CD4-positive, alpha-beta memory T cell (primary cell): ENCODE measurements at regions of chr20 and their contacts with region 1.

Region 1: DNA sequence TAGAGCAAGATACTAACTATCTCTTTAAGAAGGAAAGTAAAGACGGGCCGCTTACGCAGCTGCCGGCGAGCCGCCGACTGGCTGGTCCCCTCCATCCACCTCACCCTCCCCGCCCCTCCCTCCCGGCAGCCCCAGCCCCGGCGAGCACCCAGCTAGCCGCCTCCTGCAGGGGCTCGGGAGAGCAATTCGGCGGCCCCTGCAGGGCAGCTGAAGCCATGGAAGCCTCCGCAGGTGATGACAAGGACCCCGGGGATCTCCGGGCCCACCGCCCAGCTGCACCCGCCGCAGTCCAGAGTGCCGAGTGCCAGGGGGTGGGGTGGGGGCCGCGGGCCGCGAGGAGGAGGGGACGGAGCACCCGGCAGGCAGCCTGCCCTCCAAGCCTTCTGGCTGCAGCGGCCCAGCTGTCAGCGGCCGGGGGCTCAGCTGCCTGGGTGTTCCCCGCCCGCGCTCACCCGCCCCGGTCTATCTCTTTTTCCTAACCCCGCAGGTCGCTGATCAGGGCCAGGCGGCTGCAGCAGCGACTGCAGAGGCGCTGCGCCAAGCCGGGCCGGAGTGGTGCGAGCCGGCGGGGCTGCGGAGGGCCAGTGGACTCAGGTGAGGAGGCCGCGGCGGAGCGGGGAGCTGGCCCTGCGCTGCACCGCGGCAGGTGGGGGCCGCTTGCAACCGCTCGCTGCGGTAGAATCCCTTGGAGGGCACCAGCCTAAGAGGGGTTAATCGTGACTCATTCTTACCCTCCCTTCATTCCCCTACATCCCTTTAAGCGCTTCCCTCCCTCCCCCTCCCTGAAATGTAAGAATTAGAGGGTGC is at the start of gene SNPH:
- DNase-seq: peak; percentile 67 to 84 (median 72)
- H3K4me3 ChIP-seq: peak within 1 kb of the TSS; percentile 43 to 58
- H3K4me3 Mint-ChIP-seq: peak within 1 kb of the TSS; percentile 86 to 96 (median 92)
- H3K27ac ChIP-seq: peak within 1 kb of the TSS; percentile 65
- H3K27ac Mint-ChIP-seq: peak within 1 kb of the TSS; percentile 88 to 99 (median 96)
- H3K4me1 ChIP-seq: peaks cover 36% of the 10 kb centered on the region
- H3K4me1 Mint-ChIP-seq: peaks cover 23 to 53% (median 39%) of the 10 kb centered on the region in 4 donors
- H3K27me3 ChIP-seq: peaks cover 4% of the 10 kb centered on the region
- H3K27me3 Mint-ChIP-seq: no peaks in the 10 kb centered on the region
- total RNA-seq, gene SNPH: 14.3 to 15.9 TPM

Region 2: GRCh38 chr20:561437-562231 is 704.7 kb before region 1 on chr20:
- CTCF ChIA-PET with region 1: no interaction called
- POLR2A ChIA-PET with region 1: no interaction called
- intact Hi-C with region 1: no loop called
- DNase-seq: peak in 4 of 5 donors; percentile 8 to 29 (median 20)
- H3K4me3 ChIP-seq: no peak overlapping the region
- H3K4me3 Mint-ChIP-seq: peak overlapping the region in 2 of 8 donors; percentile 19 to 21
- H3K27ac ChIP-seq: no peak overlapping the region
- H3K27ac Mint-ChIP-seq: peak overlapping the region in 1 of 7 donors; percentile 83
- H3K4me1 ChIP-seq: no peaks in the 10 kb centered on the region
- H3K4me1 Mint-ChIP-seq: peaks cover 0 to 5% (median 2%) of the 10 kb centered on the region in 4 donors
- H3K27me3 ChIP-seq: no peaks in the 10 kb centered on the region
- H3K27me3 Mint-ChIP-seq: peaks cover 5 to 18% of the 10 kb centered on the region in 2 donors

Region 3: DNA sequence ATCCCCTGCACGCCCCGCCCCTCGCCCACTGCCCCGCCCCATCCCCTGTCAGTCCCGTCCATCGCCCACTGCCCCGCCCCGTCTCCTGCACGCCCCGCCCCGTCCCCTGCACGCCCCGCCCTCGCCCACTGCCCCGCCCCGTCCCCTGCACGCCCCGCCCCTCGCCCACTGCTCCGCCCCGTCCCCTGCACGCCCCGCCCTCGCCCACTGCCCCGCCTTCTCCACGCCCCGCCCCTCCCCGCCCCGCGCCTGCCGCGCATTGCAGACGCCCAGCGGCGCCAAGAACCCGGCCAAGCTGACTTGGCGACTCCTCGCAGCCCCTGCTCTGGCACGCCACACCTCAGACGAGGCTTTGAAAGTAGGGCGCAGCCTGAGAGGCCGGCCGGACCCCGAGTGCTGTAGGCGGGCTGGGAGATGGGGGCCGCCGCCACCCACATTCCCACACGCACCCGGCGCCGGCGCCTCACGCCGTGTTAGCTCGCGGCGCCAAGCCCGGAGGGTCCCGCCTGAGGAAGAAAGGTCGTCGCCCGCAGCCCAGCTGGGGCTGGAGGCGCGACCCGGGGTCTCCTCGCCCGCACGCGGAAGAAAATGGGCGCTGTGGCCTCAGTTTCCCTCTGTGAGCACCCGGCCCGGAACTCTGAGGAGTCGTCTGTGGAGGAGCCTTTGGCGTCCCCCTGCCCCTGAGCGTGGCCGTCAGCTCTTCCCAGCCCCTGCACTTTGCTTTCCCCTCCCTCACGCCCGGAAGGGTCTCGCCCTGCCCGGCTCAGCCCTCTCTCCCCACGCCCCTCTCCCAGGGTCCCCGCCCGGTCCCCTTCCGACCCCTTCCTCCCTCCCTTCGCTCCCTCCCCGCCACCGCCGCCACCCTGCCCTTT is 40.4 kb before region 1 on chr20 and contains the start of gene RAD21L1:
- CTCF ChIA-PET with region 1: no interaction called
- POLR2A ChIA-PET with region 1: interaction called, 6 read pairs
- intact Hi-C with region 1: loop called (anchors 2 kb)
- DNase-seq: peak; percentile 52 to 81 (median 60)
- H3K4me3 ChIP-seq: peak within 1 kb of the TSS; percentile 44 to 59
- H3K4me3 Mint-ChIP-seq: peak within 1 kb of the TSS; percentile 82 to 91 (median 87)
- H3K27ac ChIP-seq: peak within 1 kb of the TSS; percentile 25
- H3K27ac Mint-ChIP-seq: peak within 1 kb of the TSS; percentile 68 to 91 (median 82)
- H3K4me1 ChIP-seq: peaks cover 17% of the 10 kb centered on the region
- H3K4me1 Mint-ChIP-seq: peaks cover 2 to 18% (median 10%) of the 10 kb centered on the region in 4 donors
- H3K27me3 ChIP-seq: peaks cover 10% of the 10 kb centered on the region
- H3K27me3 Mint-ChIP-seq: peaks cover 4 to 10% of the 10 kb centered on the region in 2 donors
- total RNA-seq, gene RAD21L1: 0.78 TPM in 1 of 2 experiments, not detected in the other

Region 4: DNA sequence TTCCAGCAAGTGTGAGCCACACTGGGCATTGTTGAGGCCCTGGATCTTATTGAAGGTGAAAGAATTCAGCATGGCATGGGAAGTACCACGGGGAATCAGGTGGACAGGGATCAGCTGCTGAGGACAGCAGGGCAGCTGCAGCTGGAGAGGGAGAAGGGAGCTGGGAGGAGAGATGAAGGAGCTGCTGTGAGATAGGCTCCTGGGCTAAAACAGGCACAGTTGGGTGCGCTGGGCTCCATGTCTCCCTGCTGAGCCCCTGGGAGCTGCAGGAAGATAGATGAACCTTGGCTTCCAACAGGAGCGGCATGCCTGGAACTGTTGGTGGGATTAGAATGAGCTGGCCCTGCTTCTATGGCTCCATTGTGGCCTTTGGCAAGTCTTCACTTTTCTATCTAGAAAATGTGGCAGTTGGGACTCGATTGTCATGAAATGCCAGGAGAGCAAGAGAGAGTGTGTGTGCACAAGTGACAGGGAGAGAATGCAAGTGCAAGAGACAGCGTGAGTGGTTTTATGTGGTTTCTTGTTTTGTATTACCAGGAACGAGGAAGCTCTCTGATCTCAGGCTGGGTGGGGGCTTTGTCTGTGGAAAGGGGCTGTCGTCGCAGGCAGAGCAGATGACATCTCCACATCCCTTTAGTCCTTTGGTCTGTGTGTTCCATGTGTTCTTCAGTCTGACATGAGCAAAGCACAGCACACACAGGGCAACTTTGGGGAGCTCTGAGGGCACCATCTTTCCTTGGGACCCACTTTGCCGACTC is 20.1 kb after region 1 on chr20:
- CTCF ChIA-PET with region 1: no interaction called
- POLR2A ChIA-PET with region 1: interaction called, 9 read pairs
- intact Hi-C with region 1: loop called (anchors 1 kb)
- DNase-seq: peak; percentile 24 to 52 (median 31)
- H3K4me3 ChIP-seq: peak overlapping the region in 1 of 2 donors; percentile 33
- H3K4me3 Mint-ChIP-seq: peak overlapping the region; percentile 9 to 87 (median 61)
- H3K27ac ChIP-seq: no peak overlapping the region
- H3K27ac Mint-ChIP-seq: peak overlapping the region; percentile 28 to 94 (median 89)
- H3K4me1 ChIP-seq: peaks cover 26% of the 10 kb centered on the region
- H3K4me1 Mint-ChIP-seq: peaks cover 24 to 47% (median 38%) of the 10 kb centered on the region in 4 donors
- H3K27me3 ChIP-seq: no peaks in the 10 kb centered on the region
- H3K27me3 Mint-ChIP-seq: no peaks in the 10 kb centered on the region

Region 5: DNA sequence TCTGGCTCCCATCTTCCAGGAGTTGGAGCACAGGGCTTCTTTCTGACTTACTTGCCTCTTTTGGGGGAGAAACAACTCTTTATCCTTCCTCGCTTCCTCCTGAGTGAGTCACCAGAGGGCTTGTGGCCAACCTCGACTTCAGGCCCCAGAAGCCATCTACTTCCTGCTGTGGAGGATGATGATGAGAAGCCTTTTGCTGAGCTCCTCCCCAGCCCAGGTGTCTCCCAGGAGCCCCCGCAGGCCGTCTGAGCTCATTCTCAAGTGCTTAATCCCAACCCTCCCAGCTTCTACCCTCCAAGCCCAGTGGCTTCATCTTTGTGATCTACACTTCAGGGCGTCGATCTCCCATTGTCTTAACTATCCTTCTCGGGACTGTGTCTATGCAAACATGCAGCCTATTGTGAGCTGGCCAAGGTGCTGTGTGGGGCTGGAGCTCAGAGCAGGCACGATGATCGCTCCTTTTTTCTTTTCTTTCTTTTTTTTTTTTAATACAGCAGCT is 34.7 kb after region 1 on chr20:
- CTCF ChIA-PET with region 1: interaction called, 3 read pairs
- POLR2A ChIA-PET with region 1: interaction called, 8 read pairs
- intact Hi-C with region 1: loop called (anchors 5 kb)
- DNase-seq: peak; percentile 18 to 55 (median 23)
- H3K4me3 ChIP-seq: no peak overlapping the region
- H3K4me3 Mint-ChIP-seq: peak overlapping the region in 7 of 8 donors; percentile 2 to 76 (median 55)
- H3K27ac ChIP-seq: no peak overlapping the region
- H3K27ac Mint-ChIP-seq: peak overlapping the region in 6 of 7 donors; percentile 46 to 82 (median 72)
- H3K4me1 ChIP-seq: peaks cover 13% of the 10 kb centered on the region
- H3K4me1 Mint-ChIP-seq: peaks cover 10 to 27% (median 17%) of the 10 kb centered on the region in 4 donors
- H3K27me3 ChIP-seq: no peaks in the 10 kb centered on the region
- H3K27me3 Mint-ChIP-seq: no peaks in the 10 kb centered on the region